BJ (cell line): ENCODE measurements at regions of chrX and their contacts with region 1.

Region 1: DNA sequence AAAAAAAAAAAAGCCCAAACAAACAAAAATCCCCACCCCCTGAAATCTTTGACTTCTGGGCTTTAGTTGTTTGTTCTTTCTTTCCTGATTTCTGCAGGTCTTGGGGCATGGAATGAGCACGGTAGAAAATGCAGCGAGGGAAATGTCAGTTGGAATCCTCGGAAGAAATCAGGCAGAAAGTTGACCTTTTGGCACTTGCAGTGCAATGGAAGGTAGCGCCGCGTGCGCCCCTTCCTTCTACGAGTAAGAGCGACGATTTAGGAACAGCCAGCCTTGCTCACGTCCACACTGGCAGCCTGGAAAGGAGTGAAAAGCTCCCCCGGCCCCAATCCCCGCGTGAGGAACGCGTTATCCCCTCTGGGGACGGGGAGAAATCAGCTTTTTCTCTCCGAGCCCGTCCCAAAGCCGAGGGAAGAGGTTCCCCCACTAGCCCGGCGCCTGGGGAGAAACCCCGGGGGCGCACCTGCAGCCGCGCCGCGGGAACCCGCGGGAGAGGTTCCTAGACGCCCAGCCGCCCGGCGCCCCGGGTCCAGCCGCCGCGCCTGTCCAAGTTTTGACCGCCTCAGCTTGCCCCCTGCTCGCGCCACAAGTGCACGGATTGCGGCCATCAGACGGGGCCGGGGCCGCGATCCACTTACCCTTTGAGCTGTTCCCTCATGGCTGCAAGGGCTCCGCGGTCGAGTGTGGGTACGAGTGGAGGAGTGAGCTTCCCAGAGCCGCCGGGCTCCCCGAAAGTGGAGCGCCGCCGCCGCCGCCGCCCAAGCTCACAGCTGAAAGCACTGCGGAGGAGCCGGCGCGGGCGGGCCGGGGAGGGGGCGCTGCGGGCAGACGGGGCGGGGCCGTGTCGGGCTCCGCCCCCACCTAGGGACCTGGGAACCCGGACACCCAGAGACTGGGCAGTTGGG is 194.6 kb upstream of the FTHL17 start:
- DNase-seq: no peak
- H3K4me3 ChIP-seq: peak overlapping the region; percentile 62
- H3K27me3 ChIP-seq: no peaks in the 10 kb centered on the region
- CTCF ChIP-seq: no peak

Region 2: DNA sequence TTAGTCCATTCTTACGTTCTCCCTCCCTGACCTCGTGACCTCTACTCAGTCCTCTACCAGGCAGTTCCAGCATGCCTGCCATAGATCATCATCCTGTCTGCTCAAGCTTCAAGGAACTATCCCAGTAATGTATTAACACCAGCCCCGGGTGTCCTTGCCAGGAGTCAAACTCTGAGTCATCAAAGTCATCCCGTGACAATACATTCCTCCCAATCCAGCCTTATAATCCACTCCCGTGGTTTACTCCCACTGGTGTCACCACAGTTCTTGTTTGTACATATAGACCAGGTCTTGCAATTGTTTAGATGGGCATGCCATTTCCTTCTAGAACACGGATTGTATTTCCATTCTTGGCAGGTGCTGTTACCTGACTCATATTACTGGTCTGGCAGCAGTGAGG is 308.7 kb before region 1 on chrX:
- CTCF ChIA-PET with region 1: no interaction called
- POLR2A ChIA-PET with region 1: no interaction called
- DNase-seq: no peak
- H3K4me3 ChIP-seq: no peak overlapping the region
- H3K27me3 ChIP-seq: no peaks in the 10 kb centered on the region
- CTCF ChIP-seq: no peak

Region 3: DNA sequence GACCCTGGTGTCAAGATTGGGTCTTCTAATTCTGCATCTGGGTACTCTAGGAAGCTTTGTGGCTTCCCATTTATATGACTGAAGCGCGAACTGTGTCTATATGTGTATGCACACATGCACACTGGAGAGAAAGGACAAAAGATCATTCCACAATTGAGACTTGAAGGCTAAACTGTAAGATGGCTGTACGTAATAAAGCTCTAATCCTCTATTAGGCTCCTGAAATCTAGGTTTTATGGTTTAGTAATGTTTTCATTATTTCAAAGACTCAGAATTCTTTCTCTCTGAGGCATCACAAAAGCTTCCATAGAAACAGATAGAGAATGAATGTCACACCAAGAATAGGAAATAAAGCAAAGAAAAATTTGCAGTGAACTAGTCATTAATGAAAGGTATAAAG is 126.1 kb after region 1 on chrX:
- CTCF ChIA-PET with region 1: no interaction called
- POLR2A ChIA-PET with region 1: interaction called, 10 read pairs
- DNase-seq: no peak
- H3K4me3 ChIP-seq: no peak overlapping the region
- H3K27me3 ChIP-seq: no peaks in the 10 kb centered on the region
- CTCF ChIP-seq: no peak